ENCODE measurements at regions of chr18 and their contacts with region 1.

Region 1: DNA sequence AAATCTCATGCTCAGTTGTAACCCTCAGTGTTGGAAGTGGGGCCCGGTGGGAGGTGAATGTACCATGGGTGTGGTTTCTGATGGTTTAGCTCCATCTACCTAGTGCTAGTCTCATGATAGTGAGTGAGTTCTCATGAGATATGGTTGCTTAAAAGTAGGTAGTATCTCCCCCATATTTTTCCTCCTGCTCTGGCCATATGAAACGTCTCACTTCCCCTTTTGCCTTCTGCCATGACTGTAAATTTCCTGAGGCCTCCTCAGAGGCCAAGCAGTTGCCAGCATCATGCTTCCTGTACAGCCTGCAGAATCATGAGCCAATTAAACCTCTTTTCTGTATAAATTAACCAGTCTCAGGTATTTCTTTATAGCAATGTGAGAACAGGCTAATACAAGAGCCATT is 62.8 kb upstream of the RNF152 start:
- DNase-seq: no peak
- H3K4me3 Mint-ChIP-seq: no peak overlapping the region
- H3K27ac Mint-ChIP-seq: no peak overlapping the region
- H3K4me1 Mint-ChIP-seq: peaks cover 30% of the 10 kb centered on the region
- H3K27me3 Mint-ChIP-seq: peaks cover 2% of the 10 kb centered on the region

Region 2: GRCh38 chr18:61893971-61894750 is 61.5 kb before region 1 on chr18:
- CTCF ChIA-PET with region 1: interaction called, 4 read pairs
- intact Hi-C with region 1: loop called (anchors 1 kb)
- DNase-seq: peak; percentile 81
- H3K4me3 Mint-ChIP-seq: peak overlapping the region; percentile 75
- H3K27ac Mint-ChIP-seq: no peak overlapping the region
- H3K4me1 Mint-ChIP-seq: peaks cover 6% of the 10 kb centered on the region
- H3K27me3 Mint-ChIP-seq: peaks cover 28% of the 10 kb centered on the region

Region 3: GRCh38 chr18:61926532-61926931 is 29.1 kb before region 1 on chr18:
- CTCF ChIA-PET with region 1: no interaction called
- intact Hi-C with region 1: loop called (anchors 1 kb)
- DNase-seq: peak; percentile 69
- H3K4me3 Mint-ChIP-seq: no peak overlapping the region
- H3K27ac Mint-ChIP-seq: no peak overlapping the region
- H3K4me1 Mint-ChIP-seq: peaks cover 30% of the 10 kb centered on the region
- H3K27me3 Mint-ChIP-seq: no peaks in the 10 kb centered on the region

Region 4: DNA sequence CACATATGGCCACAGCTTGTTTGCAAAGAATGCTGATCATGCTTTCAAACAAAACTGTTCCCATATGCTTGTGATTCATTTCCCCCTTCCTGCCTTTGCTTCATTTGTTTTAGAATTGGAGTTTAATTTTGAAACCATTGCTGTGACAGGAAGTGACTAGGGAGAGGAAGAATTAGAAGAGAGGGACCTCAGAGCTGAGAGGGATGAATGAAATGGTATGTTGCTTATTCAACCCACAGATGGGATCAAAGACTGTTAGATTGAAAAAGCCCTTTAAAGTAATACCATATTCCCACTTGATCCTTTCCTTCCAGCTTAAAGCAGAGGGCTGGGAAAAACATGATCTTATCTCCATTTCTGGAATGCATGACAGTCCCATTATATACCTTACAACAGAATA is 43.3 kb after region 1 on chr18:
- CTCF ChIA-PET with region 1: no interaction called
- intact Hi-C with region 1: loop called (anchors 1 kb)
- DNase-seq: no peak
- H3K4me3 Mint-ChIP-seq: no peak overlapping the region
- H3K27ac Mint-ChIP-seq: no peak overlapping the region
- H3K4me1 Mint-ChIP-seq: peaks cover 8% of the 10 kb centered on the region
- H3K27me3 Mint-ChIP-seq: peaks cover 7% of the 10 kb centered on the region

Region 5: GRCh38 chr18:62109676-62110075 is 154.0 kb after region 1 on chr18:
- CTCF ChIA-PET with region 1: no interaction called
- intact Hi-C with region 1: no loop called
- DNase-seq: no peak
- H3K4me3 Mint-ChIP-seq: no peak overlapping the region
- H3K27ac Mint-ChIP-seq: no peak overlapping the region
- H3K4me1 Mint-ChIP-seq: no peaks in the 10 kb centered on the region
- H3K27me3 Mint-ChIP-seq: no peaks in the 10 kb centered on the region

Region 6: DNA sequence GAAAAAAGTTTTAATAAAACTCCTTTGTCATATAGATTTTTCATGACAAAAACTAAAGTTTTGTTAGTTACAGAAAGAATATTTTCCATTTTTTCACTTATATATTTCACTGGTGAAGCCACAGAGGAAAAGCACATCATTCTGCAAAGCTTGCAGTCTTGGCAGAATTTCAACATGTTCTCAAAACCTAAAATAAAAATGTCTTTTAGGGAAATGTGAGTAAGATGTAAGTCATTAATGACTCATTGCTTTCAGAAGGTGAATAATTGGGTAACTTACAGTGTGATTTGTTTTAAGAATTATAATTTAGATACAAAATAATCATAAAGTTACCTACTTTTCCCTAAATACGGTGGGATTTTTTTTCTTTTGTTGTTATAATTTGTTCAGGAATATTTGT is 326.0 kb after region 1 on chr18:
- CTCF ChIA-PET with region 1: no interaction called
- intact Hi-C with region 1: loop called (anchors 1 kb)
- DNase-seq: no peak
- H3K4me3 Mint-ChIP-seq: no peak overlapping the region
- H3K27ac Mint-ChIP-seq: no peak overlapping the region
- H3K4me1 Mint-ChIP-seq: peaks cover 39% of the 10 kb centered on the region
- H3K27me3 Mint-ChIP-seq: no peaks in the 10 kb centered on the region

Region 7: GRCh38 chr18:62498616-62499262 is 543.1 kb after region 1 on chr18:
- CTCF ChIA-PET with region 1: no interaction called
- intact Hi-C with region 1: no loop called
- DNase-seq: no peak
- H3K4me3 Mint-ChIP-seq: no peak overlapping the region
- H3K27ac Mint-ChIP-seq: no peak overlapping the region
- H3K4me1 Mint-ChIP-seq: no peaks in the 10 kb centered on the region
- H3K27me3 Mint-ChIP-seq: peaks cover 3% of the 10 kb centered on the region